Mammary epithelial cell (primary cell): ENCODE measurements at regions of chrX and their contacts with region 1.

Region 1: DNA sequence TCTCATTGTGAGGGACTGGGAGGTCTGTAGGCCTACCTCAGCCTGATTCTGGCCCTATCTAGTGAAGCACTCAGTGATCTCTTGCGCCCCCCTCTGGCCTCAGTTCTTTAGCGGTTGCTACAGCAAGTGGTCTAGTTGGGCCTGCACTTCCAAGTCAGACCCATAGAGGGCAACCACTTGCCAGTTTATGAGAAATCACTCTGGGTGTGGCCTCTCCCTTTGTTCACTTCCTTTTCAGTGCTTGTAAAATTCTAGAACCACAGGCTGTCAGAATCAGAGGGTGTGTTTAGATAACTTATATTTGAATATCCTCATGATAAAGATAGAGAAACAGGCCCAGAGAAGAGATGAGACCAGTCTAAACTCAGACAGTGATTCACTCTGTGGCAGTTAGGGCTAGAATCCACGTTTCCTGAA is 60.9 kb upstream of the LAS1L start:
- DNase-seq: peak; percentile 81
- H3K4me3 ChIP-seq: no peak overlapping the region
- H3K27ac ChIP-seq: peak overlapping the region; percentile 53
- H3K4me1 ChIP-seq: peaks cover 12% of the 10 kb centered on the region
- H3K27me3 ChIP-seq: no peaks in the 10 kb centered on the region
- CTCF ChIP-seq: peak; percentile 95 to 99

Region 2: GRCh38 chrX:65073233-65073632 is 522.2 kb before region 1 on chrX:
- CTCF ChIA-PET with region 1: no interaction called
- dilution Hi-C with region 1: no loop called
- in situ Hi-C with region 1: no loop called
- intact Hi-C with region 1: no loop called
- DNase-seq: no peak
- H3K4me3 ChIP-seq: no peak overlapping the region
- H3K27ac ChIP-seq: no peak overlapping the region
- H3K4me1 ChIP-seq: no peaks in the 10 kb centered on the region
- H3K27me3 ChIP-seq: no peaks in the 10 kb centered on the region
- CTCF ChIP-seq: no peak

Region 3: DNA sequence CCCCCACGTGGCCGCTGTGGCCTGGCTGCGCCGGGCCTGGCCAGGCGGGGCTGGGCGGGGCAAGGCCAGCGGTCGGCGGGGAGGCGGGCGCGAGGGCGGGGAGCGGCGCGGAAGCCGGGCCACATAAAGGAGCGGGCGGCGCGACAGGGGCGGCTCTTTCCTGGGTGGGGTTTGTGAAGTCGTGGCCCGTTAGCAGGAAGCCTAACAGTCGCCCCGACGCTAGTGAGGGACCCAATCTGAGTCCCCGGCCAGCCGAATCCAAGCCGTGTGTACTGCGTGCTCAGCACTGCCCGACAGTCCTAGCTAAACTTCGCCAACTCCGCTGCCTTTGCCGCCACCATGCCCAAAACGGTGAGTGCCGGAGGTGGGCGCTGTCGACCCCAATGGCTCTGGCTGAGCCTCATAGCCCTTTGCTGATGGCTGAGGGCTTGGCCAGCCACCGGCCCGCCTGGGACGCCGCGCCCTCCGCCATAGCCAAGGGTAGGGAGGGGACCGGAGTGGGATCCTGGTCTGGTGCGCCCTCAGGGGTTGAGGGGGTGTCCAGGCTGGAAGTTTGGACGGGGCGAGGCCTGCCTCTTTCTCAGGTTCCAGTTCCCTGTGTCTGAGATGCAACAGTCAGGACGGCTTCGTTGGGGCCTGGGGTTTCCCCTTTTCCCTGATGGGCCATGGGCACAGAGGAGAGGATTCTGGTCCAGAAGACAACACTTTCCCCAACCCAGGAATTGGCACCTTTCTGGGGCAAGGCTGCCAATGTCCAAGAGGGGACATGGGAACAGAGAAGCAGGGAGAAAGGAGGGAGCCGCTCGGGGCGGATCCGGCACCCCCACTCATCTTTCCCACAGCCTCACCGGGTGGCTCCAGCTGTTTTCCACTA is 72.3 kb after region 1 on chrX and contains the start of gene MSN:
- CTCF ChIA-PET with region 1: interaction called, 5 read pairs
- dilution Hi-C with region 1: no loop called
- in situ Hi-C with region 1: loop called in 1 of 2 experiments (anchors 10 kb)
- intact Hi-C with region 1: loop called (anchors 1 kb)
- DNase-seq: peak; percentile 55
- H3K4me3 ChIP-seq: peak within 1 kb of the TSS; percentile 43 to 83 (median 78)
- H3K27ac ChIP-seq: peak within 1 kb of the TSS; percentile 90
- H3K4me1 ChIP-seq: peaks cover 5% of the 10 kb centered on the region
- H3K27me3 ChIP-seq: no peaks in the 10 kb centered on the region
- CTCF ChIP-seq: no peak
- total RNA-seq, gene MSN: 261 to 317 TPM

Region 4: GRCh38 chrX:65706041-65706828 is 110.8 kb after region 1 on chrX:
- CTCF ChIA-PET with region 1: interaction called, 3 read pairs
- dilution Hi-C with region 1: no loop called
- in situ Hi-C with region 1: no loop called
- intact Hi-C with region 1: loop called (anchors 1 kb)
- DNase-seq: peak; percentile 83
- H3K4me3 ChIP-seq: no peak overlapping the region
- H3K27ac ChIP-seq: peak overlapping the region; percentile 57
- H3K4me1 ChIP-seq: peaks cover 33% of the 10 kb centered on the region
- H3K27me3 ChIP-seq: no peaks in the 10 kb centered on the region
- CTCF ChIP-seq: no peak

Region 5: DNA sequence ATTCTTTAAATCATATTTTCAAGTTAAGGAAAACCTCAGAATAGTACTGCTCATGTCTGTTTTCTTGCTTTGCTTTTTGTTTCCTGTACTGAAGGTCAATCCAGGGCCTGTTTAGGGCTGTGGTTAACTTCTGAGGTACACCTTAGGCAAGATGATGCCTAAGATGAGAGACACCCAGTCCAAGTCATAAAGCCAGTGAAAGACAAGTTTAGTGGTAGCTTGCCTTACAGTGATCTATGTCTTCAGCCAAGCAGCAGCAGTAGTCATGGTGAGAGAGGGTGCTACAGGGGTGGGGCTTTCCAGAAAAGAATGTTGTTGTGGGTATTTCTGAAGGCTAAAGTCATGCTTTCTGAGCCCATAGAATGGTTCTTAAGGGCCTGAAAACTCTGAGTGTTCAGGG is 270.7 kb after region 1 on chrX:
- CTCF ChIA-PET with region 1: no interaction called
- dilution Hi-C with region 1: no loop called
- in situ Hi-C with region 1: no loop called
- intact Hi-C with region 1: loop called (anchors 10 kb)
- DNase-seq: peak; percentile 34
- H3K4me3 ChIP-seq: no peak overlapping the region
- H3K27ac ChIP-seq: no peak overlapping the region
- H3K4me1 ChIP-seq: no peaks in the 10 kb centered on the region
- H3K27me3 ChIP-seq: no peaks in the 10 kb centered on the region
- CTCF ChIP-seq: no peak

Region 6: DNA sequence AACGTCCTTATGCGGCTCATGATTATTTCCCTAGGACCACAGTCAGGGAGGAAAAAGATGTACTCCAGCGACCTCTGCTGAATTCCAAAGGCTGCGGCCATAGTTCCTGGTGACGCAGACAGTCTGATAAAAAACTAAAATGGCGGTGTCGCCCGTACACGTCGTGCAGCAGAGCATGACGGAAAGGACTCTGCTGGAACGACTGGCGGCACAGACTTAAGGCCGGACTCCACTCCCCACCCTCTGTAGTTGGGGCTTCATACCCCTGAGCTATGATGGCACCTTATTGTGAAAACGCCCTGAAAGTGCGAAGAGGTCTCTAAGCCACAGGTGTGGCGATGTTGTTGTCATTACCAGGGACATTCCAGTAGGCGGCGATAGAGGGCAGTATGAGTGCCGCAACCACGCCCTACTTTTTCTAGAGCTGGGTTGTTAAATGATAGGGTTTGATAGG is 1133.4 kb after region 1 on chrX:
- CTCF ChIA-PET with region 1: no interaction called
- dilution Hi-C with region 1: no loop called
- in situ Hi-C with region 1: loop called in 1 of 2 experiments (anchors 25 kb)
- intact Hi-C with region 1: no loop called
- DNase-seq: peak; percentile 55
- H3K4me3 ChIP-seq: peak overlapping the region; percentile 27 to 66 (median 52)
- H3K27ac ChIP-seq: no peak overlapping the region
- H3K4me1 ChIP-seq: no peaks in the 10 kb centered on the region
- H3K27me3 ChIP-seq: no peaks in the 10 kb centered on the region
- CTCF ChIP-seq: peak; percentile 44 to 62